Ascending aorta (tissue), 2 donors: ENCODE measurements at regions of chr5 and their contacts with region 1.

Region 1: DNA sequence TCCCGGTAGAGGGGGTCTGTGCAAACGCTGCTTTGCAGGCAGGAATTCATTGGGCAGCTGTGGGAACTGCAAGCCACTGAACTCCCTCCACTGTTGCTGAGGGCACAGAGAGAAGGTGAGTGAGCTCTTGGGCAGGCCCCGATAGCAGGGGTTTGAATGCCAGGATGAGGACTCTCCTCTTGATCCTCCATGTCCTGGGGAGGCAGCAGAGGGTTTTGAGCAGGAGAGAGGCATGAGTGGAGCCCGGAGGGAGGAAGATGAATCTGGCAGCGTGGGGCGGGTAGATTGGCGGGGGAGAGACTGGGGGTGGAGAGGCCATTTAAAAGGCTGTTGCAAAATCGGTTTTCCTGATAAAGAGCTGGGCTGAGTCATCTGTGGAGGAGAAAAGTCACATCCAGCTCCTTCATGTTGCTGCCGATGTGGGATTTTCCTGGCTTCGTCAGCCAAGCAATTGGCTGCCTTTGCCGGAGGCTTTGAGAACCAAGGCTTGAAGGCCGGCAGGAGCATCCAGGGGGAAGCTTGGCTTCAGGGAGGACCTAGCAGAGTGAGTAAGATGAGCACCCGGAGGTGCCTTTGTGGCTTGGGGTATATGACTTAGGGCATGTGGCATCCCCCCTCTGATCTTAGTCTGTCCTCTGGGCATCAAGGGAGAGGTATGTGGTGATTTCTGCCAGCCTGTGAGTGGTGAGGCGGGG is at the start of gene SYNPO:
- DNase-seq: peak; percentile 70 to 95
- H3K4me3 ChIP-seq: peak within 1 kb of the TSS; percentile 42 to 48
- H3K27ac ChIP-seq: peak within 1 kb of the TSS; percentile 95 to 96
- H3K4me1 ChIP-seq: peaks cover 61 to 92% of the 10 kb centered on the region in 2 donors
- H3K27me3 ChIP-seq: no peaks in the 10 kb centered on the region
- CTCF ChIP-seq: peak in 1 of 3 experiments; percentile 10
- total RNA-seq, gene SYNPO: 128 TPM

Region 2: GRCh38 chr5:150624334-150625163 is 15.9 kb before region 1 on chr5:
- intact Hi-C with region 1: loop called (anchors 1 kb)
- DNase-seq: no peak
- H3K4me3 ChIP-seq: peak overlapping the region; percentile 81 to 95
- H3K27ac ChIP-seq: peak overlapping the region; percentile 96 to 99
- H3K4me1 ChIP-seq: peaks cover 18 to 51% of the 10 kb centered on the region in 2 donors
- H3K27me3 ChIP-seq: no peaks in the 10 kb centered on the region
- CTCF ChIP-seq: no peak